Motor neuron (in vitro differentiated cells): ENCODE measurements at regions of chr21 and their contacts with region 1.

Region 1: DNA sequence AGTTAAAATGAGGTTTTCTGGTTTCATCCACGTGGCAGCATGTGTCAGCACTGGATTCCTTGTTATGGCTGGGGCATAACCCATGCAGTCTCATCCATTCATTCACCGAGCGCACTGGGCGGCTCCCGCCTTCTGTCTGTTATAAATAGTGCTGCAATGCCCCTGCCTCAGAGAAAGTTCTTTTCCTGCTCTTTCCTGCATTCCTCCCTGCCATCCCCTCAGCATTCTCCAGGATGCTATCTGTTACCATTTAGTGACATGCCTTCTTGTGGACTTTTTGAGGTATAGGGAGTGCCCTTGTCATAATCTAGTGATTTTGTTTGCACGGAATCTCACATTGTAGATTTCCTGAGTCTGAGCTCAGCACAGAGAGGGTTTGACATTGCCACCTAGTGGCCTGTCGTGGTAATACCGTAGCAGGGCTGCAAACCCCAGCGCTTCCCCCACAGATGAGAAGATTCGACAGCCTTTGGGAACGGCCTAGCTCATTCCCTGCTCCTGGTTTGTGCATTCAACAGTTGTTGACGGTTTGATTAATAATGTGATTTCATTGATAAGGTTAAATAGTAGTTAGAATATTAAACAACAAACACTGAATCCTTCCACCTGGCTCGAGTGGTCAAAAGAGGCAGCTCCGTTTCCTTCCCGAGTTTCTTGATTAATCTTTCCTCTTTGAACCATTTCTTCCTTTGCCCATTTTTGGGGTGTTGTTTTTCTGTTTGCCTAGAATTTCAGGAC is 46.3 kb downstream of the UMODL1 start:
- ATAC-seq: peak; percentile 66 to 87 (median 82)
- H3K4me3 ChIP-seq: peak overlapping the region in 3 of 5 donors; percentile 3 to 20 (median 17)
- H3K27ac ChIP-seq: no peak overlapping the region
- H3K4me1 ChIP-seq: peaks cover 15 to 16% of the 10 kb centered on the region in 2 donors

Region 2: GRCh38 chr21:41828481-41829360 is 288.7 kb before region 1 on chr21:
- in situ Hi-C with region 1: loop called in 1 of 9 experiments (anchors 10 kb)
- ATAC-seq: no peak
- H3K4me3 ChIP-seq: no peak overlapping the region
- H3K27ac ChIP-seq: no peak overlapping the region
- H3K4me1 ChIP-seq: no peaks in the 10 kb centered on the region